Panc1 (cell line): ENCODE measurements at regions of chr15 and their contacts with region 1.

Region 1: GRCh38 chr15:89874926-89875564 is 18.7 kb downstream of the AP3S2 start:
- DNase-seq: peak; percentile 58
- ATAC-seq: peak; percentile 100
- H3K4me3 ChIP-seq: no peak overlapping the region
- H3K27ac ChIP-seq: no peak overlapping the region
- H3K4me1 ChIP-seq: no peaks in the 10 kb centered on the region
- H3K27me3 ChIP-seq: no peaks in the 10 kb centered on the region
- CTCF ChIP-seq: peak; percentile 98

Region 2: GRCh38 chr15:88574655-88575054 is 1300.4 kb before region 1 on chr15:
- CTCF ChIA-PET with region 1: no interaction called
- POLR2A ChIA-PET with region 1: no interaction called
- in situ Hi-C with region 1: no loop called
- intact Hi-C with region 1: no loop called
- DNase-seq: no peak
- ATAC-seq: no peak
- H3K4me3 ChIP-seq: no peak overlapping the region
- H3K27ac ChIP-seq: no peak overlapping the region
- H3K4me1 ChIP-seq: no peaks in the 10 kb centered on the region; the same call in 1 of the 2 replicates
- H3K27me3 ChIP-seq: 0 out of 2 replicates have a peak, but pooled peaks cover 2% of the 10 kb centered on the region
- CTCF ChIP-seq: no peak

Region 3: DNA sequence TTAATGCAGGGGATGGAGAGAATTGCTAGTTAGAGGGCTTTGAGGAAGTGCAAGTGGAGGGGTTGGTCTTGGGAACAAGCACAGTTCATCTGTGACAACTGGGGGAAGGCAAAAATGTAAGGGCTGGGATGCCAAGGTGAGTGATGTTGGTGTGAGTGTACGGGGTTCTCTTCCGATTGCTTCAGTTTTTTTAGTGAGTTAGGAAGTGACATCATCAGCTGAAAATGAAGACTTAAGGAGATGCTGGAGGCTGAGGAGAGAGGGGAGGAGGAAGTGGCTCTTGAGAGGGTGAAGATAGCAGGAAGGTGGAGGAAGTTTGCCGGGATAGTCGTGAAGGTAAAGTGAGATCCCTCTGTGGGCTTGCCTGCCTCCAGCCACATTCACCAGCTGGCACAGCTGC is 287.1 kb before region 1 on chr15:
- CTCF ChIA-PET with region 1: no interaction called
- POLR2A ChIA-PET with region 1: no interaction called
- in situ Hi-C with region 1: no loop called
- intact Hi-C with region 1: no loop called
- DNase-seq: no peak
- ATAC-seq: no peak
- H3K4me3 ChIP-seq: no peak overlapping the region
- H3K27ac ChIP-seq: no peak overlapping the region
- H3K4me1 ChIP-seq: no peaks in the 10 kb centered on the region
- H3K27me3 ChIP-seq: no peaks in the 10 kb centered on the region
- CTCF ChIP-seq: no peak

Region 4: GRCh38 chr15:89740137-89740536 is 134.9 kb before region 1 on chr15:
- CTCF ChIA-PET with region 1: interaction called, 24 read pairs
- POLR2A ChIA-PET with region 1: interaction called, 4 read pairs
- in situ Hi-C with region 1: no loop called
- intact Hi-C with region 1: no loop called
- DNase-seq: peak; percentile 72
- ATAC-seq: peak; percentile 96
- H3K4me3 ChIP-seq: no peak overlapping the region; a peak in 1 of 4 replicates
- H3K27ac ChIP-seq: no peak overlapping the region
- H3K4me1 ChIP-seq: no peaks in the 10 kb centered on the region
- H3K27me3 ChIP-seq: no peaks in the 10 kb centered on the region
- CTCF ChIP-seq: peak; percentile 94

Region 5: DNA sequence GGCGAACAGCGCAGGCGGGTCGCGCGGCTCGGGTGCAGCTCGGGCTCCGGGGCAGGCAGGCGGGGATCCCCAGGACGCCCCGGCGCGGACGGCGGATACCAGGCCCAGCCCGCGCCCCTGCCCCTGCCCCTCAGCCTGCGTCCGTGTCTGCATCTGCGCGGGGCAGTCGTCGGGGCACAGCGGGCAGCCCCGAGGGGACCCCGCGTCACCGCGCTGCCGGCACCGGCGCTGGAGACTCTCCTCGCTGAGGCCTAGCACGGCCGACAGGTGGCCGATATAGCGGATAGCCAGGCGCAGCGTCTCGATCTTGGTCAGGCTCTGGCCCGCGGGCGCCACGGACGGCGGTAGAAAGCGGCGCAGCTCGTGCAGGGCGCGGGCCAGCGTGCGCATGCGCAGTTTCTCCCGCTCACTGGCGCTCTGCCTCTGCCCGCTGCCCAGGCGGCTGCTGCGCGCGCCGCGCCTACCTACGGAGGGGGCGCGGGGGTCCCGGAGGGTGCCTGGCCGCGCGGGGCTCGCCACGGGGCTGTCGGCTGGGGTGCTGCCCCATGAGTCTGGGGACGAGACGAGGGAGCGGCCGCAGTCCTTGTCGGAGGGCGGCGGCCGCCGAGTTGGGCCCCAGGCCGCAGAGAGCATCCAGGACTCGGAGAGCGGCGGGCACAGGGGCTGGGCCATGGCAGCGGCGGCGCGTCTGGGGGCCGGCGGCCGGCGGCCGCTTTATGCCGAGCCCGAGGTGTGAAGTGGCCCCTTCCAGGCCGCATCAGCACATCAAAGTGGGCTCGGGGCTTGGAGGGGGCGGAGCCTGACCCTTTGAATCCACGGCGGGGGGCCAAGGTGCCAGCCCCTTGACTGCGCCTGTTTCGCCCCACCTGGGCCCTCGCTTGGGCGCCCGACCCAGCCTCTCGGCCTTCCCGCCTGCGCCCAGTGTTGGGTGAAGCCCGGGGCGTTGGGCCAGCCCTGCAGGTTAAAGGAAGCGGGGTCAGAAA is 124.2 kb before region 1 on chr15 and contains the start of gene MESP1:
- CTCF ChIA-PET with region 1: interaction called, 6 read pairs
- POLR2A ChIA-PET with region 1: interaction called, 4 read pairs
- in situ Hi-C with region 1: loop called (anchors 10 kb)
- intact Hi-C with region 1: no loop called
- DNase-seq: peak; percentile 48
- ATAC-seq: peak; percentile 94
- H3K4me3 ChIP-seq: peak within 1 kb of the TSS; percentile 54 to 57
- H3K27ac ChIP-seq: peak within 1 kb of the TSS; percentile 58
- H3K4me1 ChIP-seq: peaks cover 18% of the 10 kb centered on the region
- H3K27me3 ChIP-seq: no peaks in the 10 kb centered on the region
- CTCF ChIP-seq: peak; percentile 85
- total RNA-seq, gene MESP1: 6.4 TPM

Region 6: DNA sequence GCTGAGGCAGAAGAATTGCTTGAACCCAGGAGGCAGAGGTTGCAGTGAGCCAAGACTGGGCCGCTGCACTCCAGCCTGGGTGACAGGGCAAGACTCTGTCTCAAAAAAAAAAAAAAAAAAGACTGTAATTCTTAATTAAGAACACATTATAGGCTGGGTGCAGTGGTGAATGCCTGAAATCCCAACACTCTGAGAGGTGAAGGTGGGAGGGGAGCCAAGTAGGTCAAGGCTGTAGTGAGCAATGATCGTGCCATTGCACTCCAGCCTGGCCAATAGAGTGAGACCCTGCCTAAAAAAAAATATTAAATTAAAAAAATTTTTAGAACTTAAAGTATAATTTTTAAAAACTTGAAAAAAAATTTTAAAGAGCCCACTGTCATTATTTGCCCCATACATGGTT is 51.1 kb after region 1 on chr15:
- CTCF ChIA-PET with region 1: no interaction called
- POLR2A ChIA-PET with region 1: no interaction called
- in situ Hi-C with region 1: no loop called
- intact Hi-C with region 1: no loop called
- DNase-seq: no peak
- ATAC-seq: no peak
- H3K4me3 ChIP-seq: no peak overlapping the region
- H3K27ac ChIP-seq: no peak overlapping the region
- H3K4me1 ChIP-seq: no peaks in the 10 kb centered on the region
- H3K27me3 ChIP-seq: no peaks in the 10 kb centered on the region
- CTCF ChIP-seq: no peak